ENCODE measurements at regions of chr6 and their contacts with region 1.

Region 1: GRCh38 chr6:93927731-93928130 is 508.4 kb upstream of the EPHA7 start:
- DNase-seq: no peak
- ATAC-seq: no peak
- H3K4me3 ChIP-seq: no peak overlapping the region
- H3K27ac ChIP-seq: no peak overlapping the region
- H3K4me1 ChIP-seq: no peaks in the 10 kb centered on the region
- H3K27me3 ChIP-seq: no peaks in the 10 kb centered on the region
- CTCF ChIP-seq: no peak
- POLR2A ChIP-seq: no peak
- RAD21 ChIP-seq: no peak

Region 2: DNA sequence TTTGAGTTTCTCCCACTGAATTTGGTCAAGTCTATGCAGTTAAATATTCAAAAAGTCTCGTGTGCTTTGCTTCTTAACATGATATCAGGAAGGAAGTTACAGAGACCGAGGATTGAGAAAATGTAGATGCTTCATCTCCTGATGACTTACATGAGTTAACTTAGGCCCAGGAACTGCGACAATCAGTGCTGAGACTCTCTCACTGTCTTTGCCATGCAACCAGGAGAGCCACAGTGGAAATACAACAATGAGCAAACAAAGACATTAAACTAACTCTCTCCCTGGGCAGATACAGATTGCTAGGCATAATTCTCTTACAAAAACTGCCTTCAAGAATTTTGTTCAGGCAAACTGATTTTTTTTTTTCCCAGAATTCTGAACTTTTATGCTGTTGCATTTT is 67.8 kb before region 1 on chr6:
- CTCF ChIA-PET with region 1: no interaction called
- POLR2A ChIA-PET with region 1: no interaction called
- RAD21 ChIA-PET with region 1: no interaction called
- intact Hi-C with region 1: loop called (anchors 5 kb)
- DNase-seq: no peak
- ATAC-seq: no peak
- H3K4me3 ChIP-seq: no peak overlapping the region
- H3K27ac ChIP-seq: no peak overlapping the region
- H3K4me1 ChIP-seq: no peaks in the 10 kb centered on the region
- H3K27me3 ChIP-seq: no peaks in the 10 kb centered on the region
- CTCF ChIP-seq: no peak
- POLR2A ChIP-seq: no peak
- RAD21 ChIP-seq: no peak

Measured in HCT116 (cell line).